B cell (primary cell): ENCODE measurements at regions of chr3 and their contacts with region 1.

Region 1: DNA sequence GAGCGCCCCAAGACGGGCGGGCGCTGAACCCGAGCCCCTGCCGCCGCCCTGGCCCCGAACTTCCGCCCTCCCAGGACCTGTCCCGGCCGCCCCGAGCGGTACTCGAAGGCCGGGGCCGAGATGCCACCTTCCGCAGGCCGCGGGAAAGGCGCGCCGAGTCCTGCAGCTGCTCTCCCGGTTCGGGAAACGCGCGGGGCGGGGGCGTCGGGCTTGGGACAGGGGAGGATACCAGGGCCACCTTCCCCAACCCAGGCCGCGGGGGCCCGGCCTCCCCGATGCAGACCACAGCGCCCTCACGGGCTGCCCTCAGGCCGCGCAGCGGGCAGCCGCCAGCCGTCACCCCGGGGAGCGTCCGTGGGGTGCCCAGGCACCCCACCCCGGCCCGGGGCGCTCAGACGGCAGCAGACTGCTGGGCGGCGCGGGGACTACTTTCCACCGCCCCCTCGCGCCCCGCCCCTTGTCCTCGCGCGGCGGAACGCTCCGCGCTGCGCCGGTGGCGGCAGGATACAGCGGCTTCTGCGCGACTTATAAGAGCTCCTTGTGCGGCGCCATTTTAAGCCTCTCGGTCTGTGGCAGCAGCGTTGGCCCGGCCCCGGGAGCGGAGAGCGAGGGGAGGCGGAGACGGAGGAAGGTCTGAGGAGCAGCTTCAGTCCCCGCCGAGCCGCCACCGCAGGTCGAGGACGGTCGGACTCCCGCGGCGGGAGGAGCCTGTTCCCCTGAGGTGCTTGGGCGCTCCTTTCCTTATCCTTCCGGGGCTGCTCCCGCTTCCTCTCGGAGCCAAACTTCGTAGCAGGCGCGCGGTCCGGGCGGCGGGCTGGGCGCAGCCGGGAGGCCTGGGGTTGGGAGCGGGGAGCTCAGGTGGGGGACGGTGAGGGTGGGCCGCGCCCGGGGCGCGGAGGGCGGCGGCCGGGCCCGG is at the start of gene CTNNB1:
- DNase-seq: peak; percentile 97
- ATAC-seq: peak; percentile 82
- H3K4me3 ChIP-seq: peak within 1 kb of the TSS; percentile 91 to 98 (median 96)
- H3K4me3 Mint-ChIP-seq: peak within 1 kb of the TSS; percentile 96
- H3K27ac ChIP-seq: peak within 1 kb of the TSS; percentile 94 to 97
- H3K27ac Mint-ChIP-seq: peak within 1 kb of the TSS; percentile 95
- H3K4me1 ChIP-seq: peaks cover 38 to 43% of the 10 kb centered on the region in 2 donors
- H3K4me1 Mint-ChIP-seq: peaks cover 45% of the 10 kb centered on the region
- H3K27me3 ChIP-seq: peaks cover 0 to 4% (median 0%) of the 10 kb centered on the region in 4 experiments
- H3K27me3 Mint-ChIP-seq: peaks cover 8% of the 10 kb centered on the region
- CTCF ChIP-seq: no peak
- total RNA-seq, gene CTNNB1: 178 and 202 TPM in 2 replicates

Region 2: DNA sequence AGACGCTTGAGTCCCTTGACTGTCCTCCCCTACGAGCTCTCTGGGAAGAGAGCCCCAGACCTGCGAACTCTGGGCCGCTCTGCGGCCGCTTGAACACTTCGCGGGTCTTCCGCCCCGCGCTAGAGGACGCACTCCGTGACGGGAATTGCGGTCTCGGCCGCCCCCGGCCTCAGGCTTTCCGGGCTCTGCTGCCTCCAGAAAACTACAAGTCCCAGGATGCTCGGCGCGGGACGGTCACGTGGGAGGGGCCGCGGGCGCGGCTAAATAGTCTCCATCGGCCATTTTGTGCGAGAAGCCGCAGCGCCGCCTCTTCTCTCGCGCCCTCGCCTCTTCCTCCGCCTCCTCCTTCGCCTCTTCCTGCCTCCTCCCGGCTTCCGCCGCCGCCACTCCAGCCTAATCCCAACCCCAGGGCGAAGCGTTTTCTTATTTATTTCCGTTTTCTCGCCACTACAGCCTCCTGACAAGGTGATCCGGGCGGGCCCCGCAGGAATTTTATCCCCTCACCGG is 889.7 kb before region 1 on chr3 and contains the start of gene EIF1B:
- CTCF ChIA-PET with region 1: no interaction called
- POLR2A ChIA-PET with region 1: no interaction called
- intact Hi-C with region 1: loop called (anchors 1 kb)
- DNase-seq: peak; percentile 98
- ATAC-seq: peak; percentile 87
- H3K4me3 ChIP-seq: peak within 1 kb of the TSS; percentile 77 to 98 (median 90)
- H3K4me3 Mint-ChIP-seq: peak within 1 kb of the TSS; percentile 96
- H3K27ac ChIP-seq: peak within 1 kb of the TSS; percentile 96 to 97
- H3K27ac Mint-ChIP-seq: peak within 1 kb of the TSS; percentile 99
- H3K4me1 ChIP-seq: peaks cover 15 to 20% of the 10 kb centered on the region in 2 donors
- H3K4me1 Mint-ChIP-seq: peaks cover 34% of the 10 kb centered on the region
- H3K27me3 ChIP-seq: no peaks in the 10 kb centered on the region
- H3K27me3 Mint-ChIP-seq: no peaks in the 10 kb centered on the region
- CTCF ChIP-seq: peak; percentile 90
- total RNA-seq, gene EIF1B: 70.6 and 78.1 TPM in 2 replicates

Region 3: GRCh38 chr3:40452876-40453730 is 746.1 kb before region 1 on chr3:
- CTCF ChIA-PET with region 1: interaction called, 3 read pairs
- POLR2A ChIA-PET with region 1: interaction called, 3 read pairs
- intact Hi-C with region 1: loop called (anchors 10 kb)
- DNase-seq: peak; percentile 97
- ATAC-seq: peak; percentile 90
- H3K4me3 ChIP-seq: peak overlapping the region; percentile 60 to 88 (median 77)
- H3K4me3 Mint-ChIP-seq: peak overlapping the region; percentile 96
- H3K27ac ChIP-seq: peak overlapping the region; percentile 92 to 95
- H3K27ac Mint-ChIP-seq: peak overlapping the region; percentile 99
- H3K4me1 ChIP-seq: peaks cover 24 to 28% of the 10 kb centered on the region in 2 donors
- H3K4me1 Mint-ChIP-seq: peaks cover 36% of the 10 kb centered on the region
- H3K27me3 ChIP-seq: no peaks in the 10 kb centered on the region
- H3K27me3 Mint-ChIP-seq: no peaks in the 10 kb centered on the region
- CTCF ChIP-seq: peak; percentile 6

Region 4: GRCh38 chr3:40584625-40585189 is 614.5 kb before region 1 on chr3:
- CTCF ChIA-PET with region 1: interaction called, 22 read pairs
- POLR2A ChIA-PET with region 1: interaction called, 3 read pairs
- intact Hi-C with region 1: loop called (anchors 1 kb)
- DNase-seq: peak; percentile 85
- ATAC-seq: peak; percentile 89
- H3K4me3 ChIP-seq: no peak overlapping the region
- H3K4me3 Mint-ChIP-seq: no peak overlapping the region
- H3K27ac ChIP-seq: no peak overlapping the region
- H3K27ac Mint-ChIP-seq: no peak overlapping the region
- H3K4me1 ChIP-seq: peaks cover 0 to 3% of the 10 kb centered on the region in 2 donors
- H3K4me1 Mint-ChIP-seq: peaks cover 14% of the 10 kb centered on the region
- H3K27me3 ChIP-seq: no peaks in the 10 kb centered on the region
- H3K27me3 Mint-ChIP-seq: peaks cover 7% of the 10 kb centered on the region
- CTCF ChIP-seq: peak; percentile 94

Region 5: DNA sequence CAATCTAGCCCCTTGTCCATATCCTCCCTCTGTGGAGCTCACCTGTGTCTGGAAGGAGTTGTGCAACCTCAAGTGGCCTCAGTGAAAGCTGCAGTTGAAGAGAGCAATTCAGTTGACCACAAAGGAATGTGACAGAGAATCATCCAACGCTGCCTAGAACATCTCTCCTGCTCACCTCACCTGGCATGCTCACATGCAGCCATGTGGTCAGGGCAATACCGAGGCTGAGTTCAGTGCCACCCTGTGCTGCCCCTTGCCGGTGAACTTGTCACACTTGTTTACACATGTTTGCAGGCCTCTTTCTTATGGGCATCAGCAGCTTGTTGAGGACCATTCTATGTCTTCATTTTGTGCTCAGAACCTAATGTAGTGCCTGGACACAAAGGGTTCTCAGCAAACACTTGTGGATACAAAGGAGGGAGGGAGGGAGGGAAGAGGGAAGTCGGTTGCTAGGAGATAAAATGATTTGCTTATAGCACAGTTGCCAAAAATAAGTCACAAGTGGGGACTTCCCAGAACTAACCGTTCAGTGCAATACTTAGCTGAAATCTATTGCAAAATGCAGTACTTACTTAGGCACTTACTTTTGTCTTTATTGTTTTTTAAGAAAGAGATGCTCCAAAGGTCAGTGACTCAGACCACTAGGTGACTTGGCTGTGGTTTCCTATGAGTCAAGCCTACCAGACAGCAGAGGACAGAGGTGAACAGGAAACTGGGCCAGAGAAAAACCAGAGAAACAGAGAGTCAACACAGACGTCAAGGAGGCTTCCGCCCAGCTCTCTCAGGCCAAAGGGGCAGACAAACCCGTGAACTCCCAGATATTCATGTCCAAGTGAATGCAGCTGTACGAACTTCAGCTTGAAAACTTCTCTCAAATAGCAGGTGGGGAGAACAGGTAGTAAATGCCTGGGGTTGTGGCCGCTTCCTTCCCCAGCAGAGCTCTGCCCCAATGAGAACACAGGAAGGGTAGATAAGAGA is 227.7 kb before region 1 on chr3:
- CTCF ChIA-PET with region 1: interaction called, 4 read pairs
- POLR2A ChIA-PET with region 1: interaction called, 14 read pairs
- intact Hi-C with region 1: loop called (anchors 1 kb)
- DNase-seq: peak; percentile 75
- ATAC-seq: peak; percentile 80
- H3K4me3 ChIP-seq: peak overlapping the region in 4 of 5 experiments; percentile 9 to 41 (median 22)
- H3K4me3 Mint-ChIP-seq: peak overlapping the region; percentile 69
- H3K27ac ChIP-seq: peak overlapping the region; percentile 92 to 99
- H3K27ac Mint-ChIP-seq: peak overlapping the region; percentile 88
- H3K4me1 ChIP-seq: peaks cover 51 to 56% of the 10 kb centered on the region in 2 donors
- H3K4me1 Mint-ChIP-seq: peaks cover 66% of the 10 kb centered on the region
- H3K27me3 ChIP-seq: no peaks in the 10 kb centered on the region
- H3K27me3 Mint-ChIP-seq: no peaks in the 10 kb centered on the region
- CTCF ChIP-seq: no peak

Region 6: DNA sequence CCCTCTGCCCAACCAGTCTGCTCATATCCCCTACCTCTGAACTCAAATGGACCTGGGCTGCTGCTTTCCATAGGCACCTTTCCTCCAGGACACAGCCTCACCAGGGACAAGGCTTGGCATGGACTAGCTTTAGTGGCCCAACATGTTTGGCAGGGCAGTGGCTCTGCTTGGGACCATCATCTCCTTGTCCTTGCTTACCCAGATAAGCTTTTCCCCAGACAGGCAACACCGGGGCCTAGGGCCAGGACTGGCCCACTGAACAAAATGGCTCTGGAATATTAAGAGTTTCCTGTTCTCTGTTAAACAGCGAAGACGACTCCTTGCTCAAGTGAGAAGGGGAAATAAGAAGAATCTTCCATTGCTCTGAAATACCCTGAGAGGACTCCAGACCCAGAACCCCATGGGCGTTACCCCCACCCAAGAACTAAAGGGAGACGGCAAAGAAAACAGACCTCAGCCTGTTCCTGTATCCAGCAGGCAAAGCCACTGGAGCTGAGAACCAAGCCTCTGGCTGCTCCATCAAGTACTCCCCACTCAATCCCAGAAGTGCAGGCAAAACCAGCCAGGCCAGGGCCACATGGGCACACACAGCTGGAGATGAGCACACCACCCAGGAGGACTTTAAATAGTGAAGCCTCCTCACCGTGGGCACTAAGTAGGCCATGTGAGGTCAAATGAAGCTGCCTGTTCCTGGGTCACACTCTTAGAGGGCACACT is 45.6 kb after region 1 on chr3:
- CTCF ChIA-PET with region 1: no interaction called
- POLR2A ChIA-PET with region 1: no interaction called
- intact Hi-C with region 1: loop called (anchors 5 kb)
- DNase-seq: no peak
- ATAC-seq: no peak
- H3K4me3 ChIP-seq: no peak overlapping the region
- H3K4me3 Mint-ChIP-seq: no peak overlapping the region
- H3K27ac ChIP-seq: no peak overlapping the region
- H3K27ac Mint-ChIP-seq: no peak overlapping the region
- H3K4me1 ChIP-seq: no peaks in the 10 kb centered on the region
- H3K4me1 Mint-ChIP-seq: peaks cover 5% of the 10 kb centered on the region
- H3K27me3 ChIP-seq: no peaks in the 10 kb centered on the region
- H3K27me3 Mint-ChIP-seq: no peaks in the 10 kb centered on the region
- CTCF ChIP-seq: no peak

Region 7: GRCh38 chr3:42012935-42013690 is 813.9 kb after region 1 on chr3:
- CTCF ChIA-PET with region 1: no interaction called
- POLR2A ChIA-PET with region 1: interaction called, 3 read pairs
- intact Hi-C with region 1: loop called (anchors 5 kb)
- DNase-seq: peak; percentile 92
- ATAC-seq: peak; percentile 71
- H3K4me3 ChIP-seq: peak overlapping the region; percentile 60 to 96 (median 92)
- H3K4me3 Mint-ChIP-seq: peak overlapping the region; percentile 97
- H3K27ac ChIP-seq: peak overlapping the region; percentile 99 to 100
- H3K27ac Mint-ChIP-seq: peak overlapping the region; percentile 99
- H3K4me1 ChIP-seq: peaks cover 44 to 49% of the 10 kb centered on the region in 2 donors
- H3K4me1 Mint-ChIP-seq: peaks cover 56% of the 10 kb centered on the region
- H3K27me3 ChIP-seq: no peaks in the 10 kb centered on the region
- H3K27me3 Mint-ChIP-seq: no peaks in the 10 kb centered on the region
- CTCF ChIP-seq: no peak